Right cardiac atrium (tissue), 5 donors: ENCODE measurements at regions of chr19 and their contacts with region 1.

Region 1: DNA sequence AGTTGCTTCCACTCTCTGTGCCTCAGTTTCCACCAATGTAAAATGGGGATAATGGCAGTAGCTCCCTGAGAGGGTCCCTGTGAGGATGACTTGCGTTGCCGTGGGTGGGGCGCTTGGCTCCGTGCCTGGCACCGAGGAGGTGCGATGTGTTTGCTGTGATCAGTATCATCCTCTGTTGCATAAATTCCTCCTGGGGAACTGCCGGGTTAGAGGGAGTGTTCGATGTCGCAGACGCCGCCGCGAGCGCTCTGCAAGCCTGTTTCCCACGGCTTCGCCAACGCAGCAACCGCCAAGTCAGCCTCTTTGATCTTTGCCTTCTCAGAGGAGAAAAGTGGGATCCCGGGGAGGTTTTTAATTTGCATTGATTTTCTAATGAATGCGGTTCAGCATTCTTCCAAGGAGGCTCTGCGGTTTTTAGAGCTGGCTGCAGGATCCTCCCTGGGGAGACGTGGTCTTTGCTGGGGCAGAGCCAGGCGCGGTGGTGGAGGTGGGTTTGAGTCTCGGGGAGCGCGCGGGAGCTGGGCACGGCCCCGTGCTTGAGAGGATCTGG is 7.6 kb downstream of the GPR32 start:
- DNase-seq: no peak
- ATAC-seq: no peak
- H3K4me3 ChIP-seq: no peak overlapping the region
- H3K27ac ChIP-seq: no peak overlapping the region
- H3K4me1 ChIP-seq: no peaks in the 10 kb centered on the region
- H3K27me3 ChIP-seq: no peaks in the 10 kb centered on the region

Region 2: GRCh38 chr19:50244695-50245094 is 533.1 kb before region 1 on chr19:
- intact Hi-C with region 1: loop called in 1 of 4 experiments (anchors 5 kb)
- DNase-seq: no peak
- ATAC-seq: no peak
- H3K4me3 ChIP-seq: no peak overlapping the region
- H3K27ac ChIP-seq: no peak overlapping the region
- H3K4me1 ChIP-seq: no peaks in the 10 kb centered on the region
- H3K27me3 ChIP-seq: no peaks in the 10 kb centered on the region

Region 3: GRCh38 chr19:50357178-50358100 is 420.4 kb before region 1 on chr19:
- intact Hi-C with region 1: loop called (anchors 5 to 10 kb)
- DNase-seq: peak; percentile 75 to 91 (median 89)
- ATAC-seq: peak; percentile 73 to 81
- H3K4me3 ChIP-seq: peak overlapping the region; percentile 45
- H3K27ac ChIP-seq: peak overlapping the region; percentile 96
- H3K4me1 ChIP-seq: no peaks in the 10 kb centered on the region
- H3K27me3 ChIP-seq: no peaks in the 10 kb centered on the region

Region 4: DNA sequence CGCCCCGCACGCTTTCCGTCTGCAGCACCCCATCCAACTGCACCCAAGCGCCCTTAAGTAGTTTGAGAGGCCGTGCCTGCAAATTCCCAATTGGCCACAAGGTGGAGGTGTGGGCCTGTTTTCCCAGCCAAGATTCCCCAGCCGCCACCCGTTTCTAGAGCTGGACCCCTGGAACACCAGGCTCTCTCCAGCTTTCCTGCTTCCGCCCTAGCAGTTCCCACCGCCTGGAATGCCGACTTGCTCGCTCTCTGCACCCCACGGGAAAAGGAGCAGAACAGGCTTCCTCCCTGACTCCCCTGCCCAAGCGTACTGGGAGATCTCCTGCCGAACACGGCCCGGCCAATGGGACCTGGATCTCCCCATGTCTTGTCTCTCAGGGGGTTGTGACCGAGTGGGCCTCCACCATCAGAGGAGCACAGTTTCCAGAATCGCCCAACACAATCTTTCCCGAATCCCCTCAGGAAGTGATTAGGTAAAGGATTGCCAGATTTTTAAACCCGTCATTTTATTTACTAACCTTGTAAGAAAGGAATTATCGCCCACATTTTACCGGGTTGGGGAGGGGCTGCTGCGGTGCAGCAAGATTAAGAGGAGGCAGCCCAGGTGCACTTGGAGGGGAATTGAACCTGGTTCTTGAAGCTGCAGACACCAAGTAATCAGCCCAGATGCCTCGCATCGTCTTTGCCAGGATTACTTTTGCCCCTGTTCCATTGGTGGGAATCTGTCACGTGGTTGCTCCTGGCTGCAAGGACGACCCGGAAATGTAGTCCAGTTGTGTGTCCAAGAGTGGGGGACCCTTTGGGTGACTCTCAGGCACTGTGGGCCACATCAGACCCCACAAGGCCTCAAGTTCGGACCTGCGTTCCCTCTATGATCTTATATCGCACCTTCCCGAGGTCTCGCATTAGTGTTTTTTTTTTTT is 408.9 kb before region 1 on chr19:
- intact Hi-C with region 1: loop called in 3 of 4 experiments (anchors 5 to 10 kb)
- DNase-seq: peak; percentile 79 to 93 (median 90)
- ATAC-seq: peak; percentile 94 to 96
- H3K4me3 ChIP-seq: peak overlapping the region; percentile 78
- H3K27ac ChIP-seq: peak overlapping the region; percentile 91
- H3K4me1 ChIP-seq: no peaks in the 10 kb centered on the region
- H3K27me3 ChIP-seq: no peaks in the 10 kb centered on the region

Region 5: GRCh38 chr19:50537762-50538230 is 240.0 kb before region 1 on chr19:
- intact Hi-C with region 1: loop called in 3 of 4 experiments (anchors 5 kb)
- DNase-seq: peak; percentile 82 to 92 (median 89)
- ATAC-seq: peak; percentile 74 to 85
- H3K4me3 ChIP-seq: no peak overlapping the region
- H3K27ac ChIP-seq: no peak overlapping the region
- H3K4me1 ChIP-seq: no peaks in the 10 kb centered on the region
- H3K27me3 ChIP-seq: no peaks in the 10 kb centered on the region

Region 6: GRCh38 chr19:50705422-50706019 is 72.3 kb before region 1 on chr19:
- intact Hi-C with region 1: loop called in 1 of 4 experiments (anchors 2 kb)
- DNase-seq: no peak
- ATAC-seq: peak in 1 of 2 donors; percentile 45
- H3K4me3 ChIP-seq: no peak overlapping the region
- H3K27ac ChIP-seq: no peak overlapping the region
- H3K4me1 ChIP-seq: no peaks in the 10 kb centered on the region
- H3K27me3 ChIP-seq: no peaks in the 10 kb centered on the region

Region 7: DNA sequence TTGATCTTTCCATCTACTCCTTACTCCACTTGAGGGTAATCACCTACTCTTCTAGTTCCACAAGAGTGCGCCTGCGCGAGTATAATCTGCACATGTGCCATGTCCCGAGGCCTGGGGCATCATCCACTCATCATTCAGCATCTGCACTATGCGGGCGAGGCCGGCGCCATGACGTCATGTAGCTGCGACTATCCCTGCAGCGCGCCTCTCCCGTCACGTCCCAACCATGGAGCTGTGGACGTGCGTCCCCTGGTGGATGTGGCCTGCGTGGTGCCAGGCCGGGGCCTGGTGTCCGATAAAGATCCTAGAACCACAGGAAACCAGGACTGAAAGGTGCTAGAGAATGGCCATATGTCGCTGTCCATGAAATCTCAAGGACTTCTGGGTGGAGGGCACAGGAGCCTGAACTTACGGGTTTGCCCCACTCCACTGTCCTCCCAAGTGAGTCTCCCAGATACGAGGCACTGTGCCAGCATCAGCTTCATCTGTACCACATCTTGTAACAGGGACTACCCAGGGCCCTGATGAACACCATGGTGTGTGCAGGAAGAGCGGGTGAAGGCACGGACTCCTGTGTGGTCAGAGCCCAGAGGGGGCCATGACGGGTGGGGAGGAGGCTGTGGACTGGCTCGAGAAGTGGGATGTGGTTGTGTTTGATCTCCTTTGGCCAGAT is 92.7 kb after region 1 on chr19:
- intact Hi-C with region 1: no loop called
- DNase-seq: no peak
- ATAC-seq: no peak
- H3K4me3 ChIP-seq: no peak overlapping the region
- H3K27ac ChIP-seq: no peak overlapping the region
- H3K4me1 ChIP-seq: no peaks in the 10 kb centered on the region
- H3K27me3 ChIP-seq: peaks cover 4% of the 10 kb centered on the region